ENCODE measurements at regions of chr7 and their contacts with region 1.

Region 1: DNA sequence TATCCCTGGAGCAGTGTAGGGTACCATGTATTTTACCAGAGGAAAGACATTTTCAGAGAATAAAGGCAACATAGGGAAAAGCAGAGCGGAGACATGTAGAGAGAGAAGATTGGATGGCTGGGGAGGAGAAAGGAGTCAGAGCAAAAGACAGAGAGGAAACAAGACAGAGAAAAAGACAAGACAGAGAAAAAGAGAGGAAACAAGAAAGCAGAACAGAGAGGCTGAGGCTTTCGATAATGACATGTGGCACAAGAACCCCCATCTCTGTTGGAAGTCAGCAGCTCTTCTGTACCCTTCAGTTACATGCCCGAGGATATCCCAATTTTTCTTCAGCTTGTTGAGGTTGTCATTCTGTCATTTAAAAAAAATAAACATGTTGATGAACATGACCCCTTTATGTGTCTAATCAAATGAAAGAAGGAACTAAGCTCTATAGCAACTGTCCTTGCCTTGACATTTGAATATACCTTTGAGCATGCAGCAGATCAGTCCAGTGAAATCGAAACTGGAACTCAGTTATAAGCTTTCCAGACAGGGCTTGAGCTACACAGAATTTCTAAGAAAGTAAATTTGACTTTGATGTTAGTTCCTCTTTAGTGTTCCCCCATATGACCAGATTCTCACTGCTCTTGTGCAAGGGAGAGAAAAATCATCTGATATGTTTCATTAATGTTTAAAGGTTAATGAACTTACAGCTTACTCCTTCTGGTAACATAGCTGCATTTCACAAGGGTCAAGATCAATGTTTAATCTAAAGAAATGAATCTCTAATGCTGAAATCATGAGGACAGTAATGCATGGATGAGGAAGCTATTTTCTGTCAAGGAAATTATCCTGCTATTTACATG is 75.1 kb upstream of the SP4 start:
- DNase-seq: no peak
- ATAC-seq: peak; percentile 86
- H3K4me3 Mint-ChIP-seq: peak overlapping the region; percentile 30
- H3K27ac Mint-ChIP-seq: peak overlapping the region; percentile 66
- H3K4me1 Mint-ChIP-seq: peaks cover 52% of the 10 kb centered on the region
- H3K27me3 Mint-ChIP-seq: peaks cover 2% of the 10 kb centered on the region

Region 2: DNA sequence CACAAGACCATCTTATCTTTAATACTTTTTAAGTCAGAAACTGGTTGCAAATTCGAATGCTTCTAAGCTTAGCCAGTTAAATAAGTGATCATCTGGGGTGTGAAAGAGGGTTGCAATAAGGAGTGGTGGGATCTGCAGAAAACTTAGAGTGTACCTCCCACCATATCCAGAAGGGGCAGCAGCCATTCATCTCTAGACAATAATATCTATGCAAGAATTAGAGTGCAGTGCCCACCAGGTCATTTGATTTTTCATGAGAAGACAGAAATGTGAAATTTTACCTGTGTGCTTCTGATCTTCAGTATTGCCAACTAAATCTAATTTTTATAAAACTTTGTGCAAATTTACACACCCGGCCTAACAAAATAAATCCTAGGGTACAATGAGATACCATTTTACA is 52.1 kb before region 1 on chr7:
- CTCF ChIA-PET with region 1: interaction called, 5 read pairs
- POLR2A ChIA-PET with region 1: no interaction called
- intact Hi-C with region 1: loop called (anchors 1 to 2 kb)
- DNase-seq: peak; percentile 7
- ATAC-seq: no peak
- H3K4me3 Mint-ChIP-seq: no peak overlapping the region
- H3K27ac Mint-ChIP-seq: no peak overlapping the region
- H3K4me1 Mint-ChIP-seq: peaks cover 12% of the 10 kb centered on the region
- H3K27me3 Mint-ChIP-seq: no peaks in the 10 kb centered on the region

Region 3: GRCh38 chr7:21338728-21339164 is 14.0 kb before region 1 on chr7:
- CTCF ChIA-PET with region 1: interaction called, 4 read pairs
- POLR2A ChIA-PET with region 1: interaction called, 7 read pairs
- intact Hi-C with region 1: loop called (anchors 1 kb)
- DNase-seq: peak; percentile 76
- ATAC-seq: peak; percentile 95
- H3K4me3 Mint-ChIP-seq: peak overlapping the region; percentile 21
- H3K27ac Mint-ChIP-seq: peak overlapping the region; percentile 95
- H3K4me1 Mint-ChIP-seq: peaks cover 32% of the 10 kb centered on the region
- H3K27me3 Mint-ChIP-seq: peaks cover 4% of the 10 kb centered on the region

Region 4: GRCh38 chr7:21365866-21366624 is 13.3 kb after region 1 on chr7:
- CTCF ChIA-PET with region 1: interaction called, 5 read pairs
- POLR2A ChIA-PET with region 1: no interaction called
- intact Hi-C with region 1: loop called (anchors 1 kb)
- DNase-seq: no peak
- ATAC-seq: no peak
- H3K4me3 Mint-ChIP-seq: no peak overlapping the region
- H3K27ac Mint-ChIP-seq: peak overlapping the region; percentile 47
- H3K4me1 Mint-ChIP-seq: peaks cover 43% of the 10 kb centered on the region
- H3K27me3 Mint-ChIP-seq: peaks cover 7% of the 10 kb centered on the region

Region 5: GRCh38 chr7:21371360-21371759 is 18.6 kb after region 1 on chr7:
- CTCF ChIA-PET with region 1: no interaction called
- POLR2A ChIA-PET with region 1: no interaction called
- intact Hi-C with region 1: loop called in 1 of 2 experiments (anchors 2 kb)
- DNase-seq: no peak
- ATAC-seq: no peak
- H3K4me3 Mint-ChIP-seq: no peak overlapping the region
- H3K27ac Mint-ChIP-seq: no peak overlapping the region
- H3K4me1 Mint-ChIP-seq: peaks cover 13% of the 10 kb centered on the region
- H3K27me3 Mint-ChIP-seq: peaks cover 2% of the 10 kb centered on the region

Region 6: GRCh38 chr7:21939136-21939857 is 586.5 kb after region 1 on chr7:
- CTCF ChIA-PET with region 1: no interaction called
- POLR2A ChIA-PET with region 1: no interaction called
- intact Hi-C with region 1: loop called (anchors 1 to 5 kb)
- DNase-seq: peak; percentile 82
- ATAC-seq: peak; percentile 82
- H3K4me3 Mint-ChIP-seq: peak overlapping the region; percentile 53
- H3K27ac Mint-ChIP-seq: peak overlapping the region; percentile 92
- H3K4me1 Mint-ChIP-seq: peaks cover 74% of the 10 kb centered on the region
- H3K27me3 Mint-ChIP-seq: peaks cover 2% of the 10 kb centered on the region